Activated CD8-positive, alpha-beta T cell treated with anti-CD3 and anti-CD28 coated beads, Interleukin-2, amount 10 ng/mL, durations not matched to agents 7 days and 5 days (primary cell): ENCODE measurements at regions of chr5 and their contacts with region 1.

Region 1: GRCh38 chr5:14871210-14872069 is at the start of gene ANKH:
- DNase-seq: peak; percentile 81
- ATAC-seq: peak; percentile 91
- H3K4me3 Mint-ChIP-seq: peak within 1 kb of the TSS; percentile 83
- H3K27ac Mint-ChIP-seq: peak within 1 kb of the TSS; percentile 83
- H3K4me1 Mint-ChIP-seq: peaks cover 28% of the 10 kb centered on the region
- H3K27me3 Mint-ChIP-seq: peaks cover 7% of the 10 kb centered on the region
- total RNA-seq, gene ANKH: 32.1 to 36.0 TPM

Region 2: DNA sequence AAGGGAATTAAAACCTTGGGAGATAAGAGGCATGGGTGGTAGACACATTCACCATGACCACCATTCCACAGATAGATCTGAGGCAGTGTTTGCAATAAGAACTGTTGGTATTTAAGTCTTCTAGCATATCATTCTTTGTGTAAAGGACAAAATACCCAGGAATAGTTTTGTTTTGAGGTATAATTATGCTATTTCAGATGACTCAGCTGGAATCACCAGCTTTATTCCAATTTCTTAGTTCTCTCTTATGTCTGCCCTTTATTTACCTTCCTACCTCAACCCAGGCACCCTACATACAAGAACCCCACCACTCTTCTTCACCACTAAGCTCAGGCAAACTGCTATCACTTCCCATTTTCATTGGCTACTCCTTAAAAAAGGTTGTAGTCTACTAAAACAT is 823.0 kb before region 1 on chr5:
- CTCF ChIA-PET with region 1: no interaction called
- POLR2A ChIA-PET with region 1: no interaction called
- DNase-seq: no peak
- ATAC-seq: no peak
- H3K4me3 Mint-ChIP-seq: no peak overlapping the region
- H3K27ac Mint-ChIP-seq: no peak overlapping the region
- H3K4me1 Mint-ChIP-seq: no peaks in the 10 kb centered on the region
- H3K27me3 Mint-ChIP-seq: no peaks in the 10 kb centered on the region

Region 3: GRCh38 chr5:14849516-14850294 is 21.7 kb before region 1 on chr5:
- CTCF ChIA-PET with region 1: no interaction called
- POLR2A ChIA-PET with region 1: no interaction called
- DNase-seq: no peak
- ATAC-seq: no peak
- H3K4me3 Mint-ChIP-seq: no peak overlapping the region
- H3K27ac Mint-ChIP-seq: no peak overlapping the region
- H3K4me1 Mint-ChIP-seq: no peaks in the 10 kb centered on the region
- H3K27me3 Mint-ChIP-seq: no peaks in the 10 kb centered on the region

Region 4: DNA sequence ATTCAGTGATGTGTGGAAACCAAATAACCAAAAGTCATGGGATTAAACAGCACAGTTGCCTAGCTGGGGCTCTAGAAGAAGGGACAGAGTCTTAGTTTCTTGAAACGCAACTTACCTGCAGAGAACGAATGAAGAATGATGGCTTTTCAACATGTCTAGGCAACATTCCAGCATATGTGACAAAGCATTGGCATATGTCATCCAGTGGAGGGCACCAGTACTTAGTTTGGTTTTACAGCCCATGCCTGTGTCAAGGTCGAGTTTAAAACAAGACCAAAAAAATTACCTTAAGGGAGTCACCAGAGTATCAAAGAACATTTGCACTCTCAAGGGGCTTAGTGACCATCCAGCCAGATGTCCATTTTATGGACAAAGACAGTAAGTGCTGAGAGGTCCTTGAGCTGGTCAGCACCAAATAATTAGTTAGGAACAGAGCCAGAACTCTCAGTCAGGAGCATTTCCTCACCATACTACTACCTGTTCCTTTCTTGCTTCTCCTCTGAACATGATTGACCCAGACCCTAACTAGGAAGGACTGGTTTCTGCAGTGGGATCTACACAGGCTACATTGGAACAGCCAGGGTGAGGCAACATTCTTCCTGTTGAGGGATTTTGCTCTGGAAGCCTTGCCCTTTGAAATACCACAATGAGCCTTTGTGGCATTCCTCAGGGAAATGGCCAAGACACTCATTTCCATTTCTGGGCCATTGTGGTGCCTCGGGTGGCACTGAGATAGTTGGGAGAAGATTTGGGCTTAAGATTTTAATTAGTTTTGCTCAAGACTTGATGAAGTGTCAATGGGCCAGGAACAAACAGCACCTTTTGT is 75.6 kb after region 1 on chr5:
- CTCF ChIA-PET with region 1: no interaction called
- POLR2A ChIA-PET with region 1: no interaction called
- DNase-seq: peak; percentile 45
- ATAC-seq: peak; percentile 72
- H3K4me3 Mint-ChIP-seq: no peak overlapping the region
- H3K27ac Mint-ChIP-seq: no peak overlapping the region
- H3K4me1 Mint-ChIP-seq: peaks cover 8% of the 10 kb centered on the region
- H3K27me3 Mint-ChIP-seq: peaks cover 10% of the 10 kb centered on the region

Region 5: DNA sequence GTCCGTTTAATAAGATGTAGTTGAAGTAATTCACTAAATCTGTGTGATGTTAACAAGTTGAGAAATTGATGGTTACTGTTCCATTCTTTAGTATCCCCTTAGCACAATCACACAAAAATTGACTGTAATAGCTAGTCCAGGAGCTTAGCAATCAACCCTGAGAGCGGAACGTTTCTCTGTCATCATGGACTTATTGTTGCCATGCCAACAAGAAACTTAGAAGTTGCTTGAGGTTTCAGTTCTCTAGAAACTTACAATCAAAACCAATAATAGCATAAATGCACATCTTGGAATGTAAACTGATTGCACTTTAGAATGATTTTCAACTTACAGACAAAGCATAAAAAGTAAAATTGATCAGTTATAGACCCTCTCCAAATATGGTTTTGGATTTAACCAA is 125.6 kb after region 1 on chr5:
- CTCF ChIA-PET with region 1: interaction called, 11 read pairs
- POLR2A ChIA-PET with region 1: no interaction called
- DNase-seq: no peak
- ATAC-seq: no peak
- H3K4me3 Mint-ChIP-seq: no peak overlapping the region
- H3K27ac Mint-ChIP-seq: no peak overlapping the region
- H3K4me1 Mint-ChIP-seq: peaks cover 36% of the 10 kb centered on the region
- H3K27me3 Mint-ChIP-seq: peaks cover 11% of the 10 kb centered on the region